ENCODE measurements at regions of chr18 and their contacts with region 1.

Region 1: DNA sequence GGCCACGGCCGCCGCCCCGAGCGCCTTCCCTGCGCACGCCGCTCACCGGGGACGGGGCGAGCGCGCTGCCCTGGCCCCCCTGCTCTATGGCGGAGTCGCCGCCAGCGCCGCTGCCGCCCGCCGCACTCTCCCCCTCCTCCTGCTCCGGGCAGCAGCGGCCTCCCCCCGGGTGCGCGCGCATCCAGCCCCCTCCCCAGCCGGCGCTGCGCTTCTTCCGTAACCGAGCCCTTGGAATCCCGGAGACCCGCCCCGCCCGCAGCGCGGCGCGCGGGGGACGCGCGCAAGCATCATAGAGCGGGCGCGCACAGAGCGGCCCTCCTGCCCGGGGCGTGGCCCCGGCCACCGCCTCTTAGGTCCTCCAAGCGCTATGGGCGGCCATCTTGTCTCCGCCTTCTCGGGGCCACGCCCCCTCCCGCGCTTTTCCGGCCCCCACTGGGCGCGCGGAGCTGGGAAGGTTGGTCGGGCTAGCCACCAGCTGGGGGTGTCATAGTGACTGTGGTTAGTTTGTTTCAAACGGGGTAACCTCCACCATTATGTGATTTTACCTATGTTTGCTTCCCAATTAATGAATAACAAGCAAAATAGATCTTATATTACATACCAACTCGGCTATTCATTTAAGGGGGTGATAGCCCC is at the start of gene MBD2:
- DNase-seq: peak; percentile 89 to 97 (median 92)
- ATAC-seq: peak; percentile 85
- H3K4me3 ChIP-seq: peak within 1 kb of the TSS; percentile 53 to 55
- H3K4me3 Mint-ChIP-seq: peak within 1 kb of the TSS; percentile 93
- H3K27ac ChIP-seq: peak within 1 kb of the TSS; percentile 58 to 63
- H3K27ac Mint-ChIP-seq: peak within 1 kb of the TSS; percentile 95
- H3K4me1 ChIP-seq: peaks cover 32% of the 10 kb centered on the region
- H3K4me1 Mint-ChIP-seq: peaks cover 39% of the 10 kb centered on the region
- H3K27me3 ChIP-seq: no peaks in the 10 kb centered on the region
- H3K27me3 Mint-ChIP-seq: no peaks in the 10 kb centered on the region
- CTCF ChIP-seq: no peak
- total RNA-seq, gene MBD2: 71.4 to 73.0 TPM

Region 2: GRCh38 chr18:54247511-54248175 is 23.1 kb after region 1 on chr18:
- CTCF ChIA-PET with region 1: interaction called, 4 read pairs
- POLR2A ChIA-PET with region 1: interaction called, 3 read pairs
- intact Hi-C with region 1: loop called in 1 of 2 experiments (anchors 1 kb)
- DNase-seq: no peak
- ATAC-seq: no peak
- H3K4me3 ChIP-seq: no peak overlapping the region
- H3K4me3 Mint-ChIP-seq: peak overlapping the region; percentile 59
- H3K27ac ChIP-seq: peak overlapping the region in 1 of 2 experiments; percentile 24
- H3K27ac Mint-ChIP-seq: peak overlapping the region; percentile 90
- H3K4me1 ChIP-seq: peaks cover 16% of the 10 kb centered on the region
- H3K4me1 Mint-ChIP-seq: peaks cover 18% of the 10 kb centered on the region
- H3K27me3 ChIP-seq: no peaks in the 10 kb centered on the region
- H3K27me3 Mint-ChIP-seq: no peaks in the 10 kb centered on the region
- CTCF ChIP-seq: no peak

Region 3: GRCh38 chr18:54269893-54270844 is 45.7 kb after region 1 on chr18:
- CTCF ChIA-PET with region 1: interaction called, 32 read pairs
- POLR2A ChIA-PET with region 1: interaction called, 38 read pairs
- intact Hi-C with region 1: loop called (anchors 1 kb)
- DNase-seq: peak in 5 of 9 experiments; percentile 23 to 63 (median 49)
- ATAC-seq: peak; percentile 31
- H3K4me3 ChIP-seq: peak overlapping the region; percentile 59 to 94
- H3K4me3 Mint-ChIP-seq: peak overlapping the region; percentile 95
- H3K27ac ChIP-seq: peak overlapping the region; percentile 87 to 89
- H3K27ac Mint-ChIP-seq: peak overlapping the region; percentile 97
- H3K4me1 ChIP-seq: peaks cover 10% of the 10 kb centered on the region
- H3K4me1 Mint-ChIP-seq: peaks cover 32% of the 10 kb centered on the region
- H3K27me3 ChIP-seq: no peaks in the 10 kb centered on the region
- H3K27me3 Mint-ChIP-seq: no peaks in the 10 kb centered on the region
- CTCF ChIP-seq: peak; percentile 59

Region 4: DNA sequence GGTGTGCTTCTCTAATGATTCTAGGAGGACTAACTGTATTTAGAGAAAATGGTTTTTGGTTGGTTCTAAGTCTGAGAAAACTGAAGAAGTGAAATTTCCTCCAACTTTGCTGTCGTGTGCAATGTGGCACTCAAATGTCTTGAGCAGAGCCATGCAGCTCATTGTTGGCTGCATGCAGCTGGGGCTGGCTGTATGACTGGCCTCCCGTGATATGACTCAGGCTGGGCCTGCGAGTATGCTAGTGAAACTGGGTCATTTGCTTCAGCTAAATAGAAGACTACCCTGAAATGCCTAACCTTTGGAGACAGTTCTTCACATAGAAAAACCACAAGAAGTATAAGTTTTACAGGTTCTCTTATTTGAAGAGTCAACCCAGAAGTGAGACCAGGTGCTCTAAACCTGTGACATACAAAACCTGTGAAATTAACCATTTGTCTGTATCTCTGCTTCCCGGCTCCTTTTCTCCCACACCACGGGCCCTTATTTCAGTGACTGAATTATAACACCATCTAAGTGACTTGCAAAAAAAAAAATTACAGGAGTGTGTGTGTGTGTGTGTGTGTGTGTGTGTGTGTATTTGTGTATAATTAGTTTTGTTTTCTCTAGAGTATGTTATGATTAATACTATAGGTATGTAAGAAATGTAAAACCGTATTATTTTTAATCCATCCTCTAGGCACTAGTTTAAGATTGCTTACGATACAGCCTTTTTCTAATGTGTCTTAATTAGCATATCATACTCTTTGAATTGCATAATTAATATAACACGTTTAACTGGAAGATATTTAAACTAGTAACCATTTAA is 60.7 kb after region 1 on chr18:
- CTCF ChIA-PET with region 1: no interaction called
- POLR2A ChIA-PET with region 1: no interaction called
- intact Hi-C with region 1: no loop called
- DNase-seq: peak in 3 of 9 experiments; percentile 26 to 48 (median 45)
- ATAC-seq: peak; percentile 94
- H3K4me3 ChIP-seq: no peak overlapping the region
- H3K4me3 Mint-ChIP-seq: no peak overlapping the region
- H3K27ac ChIP-seq: peak overlapping the region in 1 of 2 experiments; percentile 26
- H3K27ac Mint-ChIP-seq: peak overlapping the region; percentile 60
- H3K4me1 ChIP-seq: no peaks in the 10 kb centered on the region
- H3K4me1 Mint-ChIP-seq: peaks cover 7% of the 10 kb centered on the region
- H3K27me3 ChIP-seq: no peaks in the 10 kb centered on the region
- H3K27me3 Mint-ChIP-seq: no peaks in the 10 kb centered on the region
- CTCF ChIP-seq: no peak

Region 5: GRCh38 chr18:54357660-54358494 is 133.4 kb after region 1 on chr18 and contains the starts of genes C18orf54 and STARD6:
- CTCF ChIA-PET with region 1: interaction called, 12 read pairs
- POLR2A ChIA-PET with region 1: interaction called, 4 read pairs
- intact Hi-C with region 1: loop called (anchors 1 kb)
- DNase-seq: peak; percentile 76 to 97 (median 88)
- ATAC-seq: peak; percentile 93
- H3K4me3 ChIP-seq: peak within 1 kb of the TSS; percentile 67 to 79
- H3K4me3 Mint-ChIP-seq: peak within 1 kb of the TSS; percentile 100
- H3K27ac ChIP-seq: peak within 1 kb of the TSS; percentile 57 to 75
- H3K27ac Mint-ChIP-seq: peak within 1 kb of the TSS; percentile 94
- H3K4me1 ChIP-seq: peaks cover 11% of the 10 kb centered on the region
- H3K4me1 Mint-ChIP-seq: peaks cover 18% of the 10 kb centered on the region
- H3K27me3 ChIP-seq: peaks cover 0 to 2% of the 10 kb centered on the region in 2 experiments
- H3K27me3 Mint-ChIP-seq: no peaks in the 10 kb centered on the region
- CTCF ChIP-seq: peak; percentile 63
- total RNA-seq, gene C18orf54: 0.33 to 0.42 TPM
- total RNA-seq, gene STARD6: not detected

Region 6: DNA sequence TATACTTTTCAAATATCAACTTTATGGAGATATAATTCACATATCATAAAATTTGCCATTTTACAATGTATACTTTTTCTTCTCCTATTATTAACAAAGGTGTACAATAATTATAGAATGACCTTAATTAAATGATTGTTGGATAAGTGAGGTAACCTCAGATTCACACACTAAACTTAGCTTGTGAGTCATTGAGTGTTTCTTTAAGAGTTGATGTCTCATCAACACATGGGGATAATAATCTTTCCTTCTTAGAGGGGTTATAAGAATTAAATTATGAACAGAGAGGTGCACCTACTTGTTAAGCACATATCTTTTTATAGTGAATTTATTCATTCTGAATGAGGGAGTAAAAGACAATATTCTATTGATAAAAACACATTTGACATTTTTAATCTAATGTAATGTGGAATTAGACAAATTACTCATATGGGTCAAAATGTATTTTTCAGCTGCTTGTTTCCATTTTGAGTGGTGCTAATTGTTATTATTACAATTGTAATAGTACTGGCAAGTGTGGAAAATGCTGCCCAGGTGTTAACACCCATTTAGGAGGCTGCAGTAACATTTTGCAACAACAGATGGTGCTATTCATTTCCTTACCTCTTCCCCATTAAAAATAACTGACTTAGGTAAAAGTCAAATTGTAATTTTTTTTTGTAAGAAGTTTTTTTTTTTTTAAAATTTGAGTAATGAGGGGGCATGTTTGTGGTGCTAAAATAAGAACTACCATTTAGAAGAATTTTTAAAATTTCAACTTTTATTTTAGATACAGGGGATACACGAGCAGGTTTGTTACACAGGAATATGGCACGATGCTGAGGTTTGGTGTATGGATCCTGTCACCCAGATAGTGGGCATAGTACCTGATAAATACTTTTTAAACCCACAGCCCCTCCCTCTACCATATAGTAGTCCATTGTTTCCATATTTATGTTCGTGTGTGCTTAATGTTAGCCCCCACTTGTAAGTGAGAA is 334.4 kb after region 1 on chr18:
- CTCF ChIA-PET with region 1: no interaction called
- POLR2A ChIA-PET with region 1: no interaction called
- intact Hi-C with region 1: no loop called
- DNase-seq: peak in 2 of 9 experiments; percentile 13 to 31
- ATAC-seq: no peak
- H3K4me3 ChIP-seq: no peak overlapping the region
- H3K4me3 Mint-ChIP-seq: no peak overlapping the region
- H3K27ac ChIP-seq: no peak overlapping the region
- H3K27ac Mint-ChIP-seq: no peak overlapping the region
- H3K4me1 ChIP-seq: no peaks in the 10 kb centered on the region
- H3K4me1 Mint-ChIP-seq: no peaks in the 10 kb centered on the region
- H3K27me3 ChIP-seq: no peaks in the 10 kb centered on the region
- H3K27me3 Mint-ChIP-seq: no peaks in the 10 kb centered on the region
- CTCF ChIP-seq: peak; percentile 55

Region 7: GRCh38 chr18:54828281-54828881 is 603.9 kb after region 1 on chr18 and contains the start of gene RAB27B:
- CTCF ChIA-PET with region 1: no interaction called
- POLR2A ChIA-PET with region 1: no interaction called
- intact Hi-C with region 1: loop called in 1 of 2 experiments (anchors 5 kb)
- DNase-seq: peak; percentile 15 to 78 (median 64)
- ATAC-seq: peak; percentile 91
- H3K4me3 ChIP-seq: peak within 1 kb of the TSS; percentile 58 to 64
- H3K4me3 Mint-ChIP-seq: peak within 1 kb of the TSS; percentile 82
- H3K27ac ChIP-seq: peak within 1 kb of the TSS; percentile 24 to 64
- H3K27ac Mint-ChIP-seq: peak within 1 kb of the TSS; percentile 30
- H3K4me1 ChIP-seq: peaks cover 3% of the 10 kb centered on the region
- H3K4me1 Mint-ChIP-seq: peaks cover 18% of the 10 kb centered on the region
- H3K27me3 ChIP-seq: no peaks in the 10 kb centered on the region
- H3K27me3 Mint-ChIP-seq: peaks cover 2% of the 10 kb centered on the region
- CTCF ChIP-seq: no peak
- total RNA-seq, gene RAB27B: 0.08 to 1.2 TPM